ENCODE measurements at regions of chr9 and their contacts with region 1.

Region 1: GRCh38 chr9:6757456-6758247 is at the start of gene KDM4C:
- DNase-seq: peak; percentile 93
- H3K4me3 Mint-ChIP-seq: peak within 1 kb of the TSS; percentile 86
- H3K27ac Mint-ChIP-seq: peak within 1 kb of the TSS; percentile 99
- H3K4me1 Mint-ChIP-seq: peaks cover 25% of the 10 kb centered on the region
- H3K27me3 Mint-ChIP-seq: no peaks in the 10 kb centered on the region
- total RNA-seq, gene KDM4C: 27.4 to 28.9 TPM

Region 2: GRCh38 chr9:4792572-4793458 is 1964.8 kb before region 1 on chr9 and contains the start of gene RCL1:
- CTCF ChIA-PET with region 1: no interaction called
- intact Hi-C with region 1: loop called (anchors 2 kb)
- DNase-seq: peak; percentile 97
- H3K4me3 Mint-ChIP-seq: peak within 1 kb of the TSS; percentile 96
- H3K27ac Mint-ChIP-seq: peak within 1 kb of the TSS; percentile 84
- H3K4me1 Mint-ChIP-seq: peaks cover 49% of the 10 kb centered on the region
- H3K27me3 Mint-ChIP-seq: no peaks in the 10 kb centered on the region
- total RNA-seq, gene RCL1: 26.9 to 30.7 TPM

Region 3: DNA sequence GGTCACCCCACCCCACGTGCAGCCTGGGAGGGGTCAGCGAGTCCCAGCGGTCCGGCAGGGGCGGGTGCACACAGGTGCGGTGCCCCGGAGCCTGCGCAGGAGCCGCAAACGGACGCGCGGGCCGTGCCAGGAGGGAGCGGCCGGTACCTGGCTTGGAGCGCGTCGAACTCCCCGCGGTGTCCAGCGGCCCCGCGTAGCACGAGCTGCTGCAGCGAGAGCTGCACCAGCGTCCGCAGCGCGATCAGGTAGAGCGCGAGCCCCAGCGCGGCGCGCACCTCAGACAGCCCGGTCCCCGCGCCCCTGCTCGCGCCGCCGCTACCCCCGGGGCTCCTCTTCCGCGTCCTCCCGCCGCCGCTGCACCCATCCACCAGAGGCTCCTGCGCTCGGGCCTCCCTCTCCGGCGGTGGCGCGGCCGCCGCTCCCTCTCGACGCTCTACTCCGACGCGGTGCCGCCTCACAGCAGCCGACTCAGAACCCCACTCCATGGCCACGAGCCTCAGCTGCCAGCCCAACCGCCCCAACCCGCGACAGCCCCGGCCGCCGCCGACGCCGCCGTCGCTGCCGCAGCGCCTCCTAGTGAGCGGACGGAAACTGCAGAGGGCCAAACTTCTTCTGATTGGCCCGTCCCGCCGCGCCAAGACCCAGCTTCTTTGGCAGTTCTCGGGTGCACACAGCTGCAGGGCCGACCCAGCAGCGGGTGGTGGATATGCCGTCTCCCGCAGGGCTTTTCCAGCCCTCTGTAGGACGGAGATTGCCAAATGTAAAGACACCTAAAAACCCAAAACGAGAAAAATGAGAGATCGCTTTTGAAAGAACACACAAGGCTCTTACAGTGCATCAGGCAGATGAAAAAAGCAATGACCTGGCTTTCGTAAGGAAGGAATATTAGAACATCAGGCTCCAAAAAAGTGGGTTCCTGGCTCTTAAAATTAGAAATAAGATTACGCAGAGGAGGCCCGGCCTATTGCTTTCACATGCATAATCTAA is 924.8 kb before region 1 on chr9 and contains the start of gene ERMP1:
- CTCF ChIA-PET with region 1: no interaction called
- intact Hi-C with region 1: loop called (anchors 10 kb)
- DNase-seq: peak; percentile 93
- H3K4me3 Mint-ChIP-seq: peak within 1 kb of the TSS; percentile 93
- H3K27ac Mint-ChIP-seq: peak within 1 kb of the TSS; percentile 89
- H3K4me1 Mint-ChIP-seq: peaks cover 43% of the 10 kb centered on the region
- H3K27me3 Mint-ChIP-seq: no peaks in the 10 kb centered on the region
- total RNA-seq, gene ERMP1: 23.5 to 27.1 TPM

Region 4: GRCh38 chr9:6008169-6008979 is 749.3 kb before region 1 on chr9:
- CTCF ChIA-PET with region 1: no interaction called
- intact Hi-C with region 1: loop called (anchors 1 kb)
- DNase-seq: peak; percentile 98
- H3K4me3 Mint-ChIP-seq: peak overlapping the region; percentile 76
- H3K27ac Mint-ChIP-seq: peak overlapping the region; percentile 82
- H3K4me1 Mint-ChIP-seq: peaks cover 61% of the 10 kb centered on the region
- H3K27me3 Mint-ChIP-seq: no peaks in the 10 kb centered on the region

Region 5: DNA sequence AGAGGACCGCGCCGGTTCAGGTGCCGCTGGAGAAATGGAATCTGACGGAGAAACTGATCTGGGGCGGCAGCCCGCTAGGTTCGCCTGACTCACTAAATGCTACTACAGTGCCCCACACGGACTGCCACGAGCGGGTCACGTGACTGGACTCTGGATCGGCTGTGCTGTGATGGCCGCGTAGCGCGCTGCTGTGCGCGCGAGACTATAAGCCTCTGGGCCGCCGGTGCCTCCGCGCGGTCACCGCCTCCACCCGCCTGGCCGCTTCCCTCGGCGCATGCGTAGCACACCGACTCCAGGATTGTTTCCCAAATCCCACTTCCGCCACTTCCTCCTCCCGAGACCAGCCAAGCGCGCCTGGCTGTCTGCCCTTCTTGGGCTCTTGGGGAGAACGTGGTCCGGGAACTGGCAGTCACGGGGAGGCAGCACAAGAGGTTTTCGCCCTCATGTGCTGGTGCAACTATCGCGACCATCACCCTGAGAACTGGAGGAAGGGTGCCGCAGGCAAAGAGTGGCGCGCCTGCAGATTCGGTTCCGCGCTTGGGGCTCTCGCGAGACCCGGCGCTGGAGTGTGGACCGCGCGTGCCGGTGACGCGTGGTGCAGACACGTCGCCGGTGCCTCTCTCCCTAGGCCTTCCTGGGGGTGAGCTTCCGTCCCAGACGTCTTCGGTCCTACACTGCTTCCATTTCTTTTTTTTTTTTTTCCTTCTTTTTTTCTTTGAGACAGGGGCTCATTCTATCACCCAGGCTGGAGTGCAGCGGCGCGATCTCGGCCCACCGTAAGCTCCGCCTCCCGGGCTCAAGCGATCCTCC is 76.3 kb before region 1 on chr9:
- CTCF ChIA-PET with region 1: no interaction called
- intact Hi-C with region 1: loop called (anchors 1 kb)
- DNase-seq: peak; percentile 94
- H3K4me3 Mint-ChIP-seq: peak overlapping the region; percentile 95
- H3K27ac Mint-ChIP-seq: peak overlapping the region; percentile 99
- H3K4me1 Mint-ChIP-seq: peaks cover 18% of the 10 kb centered on the region
- H3K27me3 Mint-ChIP-seq: no peaks in the 10 kb centered on the region

Region 6: GRCh38 chr9:6715755-6716643 is 41.7 kb before region 1 on chr9:
- CTCF ChIA-PET with region 1: no interaction called
- intact Hi-C with region 1: loop called (anchors 1 kb)
- DNase-seq: peak; percentile 80
- H3K4me3 Mint-ChIP-seq: peak overlapping the region; percentile 79
- H3K27ac Mint-ChIP-seq: peak overlapping the region; percentile 71
- H3K4me1 Mint-ChIP-seq: peaks cover 6% of the 10 kb centered on the region
- H3K27me3 Mint-ChIP-seq: no peaks in the 10 kb centered on the region

Region 7: GRCh38 chr9:7298123-7298522 is 540.5 kb after region 1 on chr9:
- CTCF ChIA-PET with region 1: no interaction called
- intact Hi-C with region 1: loop called (anchors 5 kb)
- DNase-seq: peak; percentile 56
- H3K4me3 Mint-ChIP-seq: no peak overlapping the region
- H3K27ac Mint-ChIP-seq: no peak overlapping the region
- H3K4me1 Mint-ChIP-seq: peaks cover 13% of the 10 kb centered on the region
- H3K27me3 Mint-ChIP-seq: peaks cover 7% of the 10 kb centered on the region